Naive thymus-derived CD4-positive, alpha-beta T cell (primary cell): ENCODE measurements at regions of chr17 and their contacts with region 1.

Region 1: DNA sequence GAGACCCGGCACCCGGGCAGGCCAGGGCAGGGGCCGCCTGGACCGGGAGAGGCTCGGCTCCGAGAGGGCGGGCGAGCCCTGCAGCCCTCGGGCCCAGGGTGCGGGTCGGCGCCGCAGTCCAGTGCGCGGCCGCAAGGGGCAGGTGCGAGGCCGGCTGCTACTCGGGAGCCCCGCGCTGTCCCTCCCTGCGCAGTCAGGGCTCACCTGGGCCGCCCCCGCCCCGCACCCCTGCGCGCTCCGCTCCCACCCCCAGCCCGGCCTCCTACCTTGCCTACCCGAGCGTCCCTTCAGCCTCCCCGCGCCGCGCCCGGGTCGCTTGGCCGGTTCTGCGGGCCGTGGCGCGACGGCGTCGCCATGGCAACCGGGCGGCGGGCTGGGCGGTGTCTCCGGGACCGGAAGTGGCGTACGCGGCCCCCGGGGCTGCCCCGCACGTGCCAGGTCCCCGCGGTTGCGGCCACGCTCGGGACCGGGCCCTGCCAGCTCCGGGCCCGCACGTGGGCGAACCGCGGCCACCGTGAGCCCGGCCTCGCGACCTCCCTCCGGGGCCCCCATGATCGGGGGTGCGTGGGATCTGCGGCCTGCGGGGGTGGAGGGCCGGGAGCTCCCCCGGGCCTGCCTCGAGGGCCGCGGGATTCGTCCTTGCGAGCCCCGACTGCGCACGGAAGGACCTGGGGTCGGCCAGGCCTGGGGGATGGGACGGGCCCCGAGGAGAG is at the start of gene CYB561:
- DNase-seq: peak; percentile 34 to 83 (median 54)
- ATAC-seq: peak; percentile 74
- H3K4me3 ChIP-seq: peak within 1 kb of the TSS; percentile 61
- H3K4me3 Mint-ChIP-seq: peak within 1 kb of the TSS; percentile 69 to 87 (median 79)
- H3K27ac ChIP-seq: peak within 1 kb of the TSS; percentile 67
- H3K27ac Mint-ChIP-seq: peak within 1 kb of the TSS; percentile 33 to 86 (median 72)
- H3K4me1 ChIP-seq: peaks cover 9 to 11% of the 10 kb centered on the region in 2 donors
- H3K4me1 Mint-ChIP-seq: peaks cover 11 to 37% (median 23%) of the 10 kb centered on the region in 7 donors
- H3K27me3 ChIP-seq: no peaks in the 10 kb centered on the region
- H3K27me3 Mint-ChIP-seq: peaks cover 0 to 24% (median 0%) of the 10 kb centered on the region in 5 donors
- total RNA-seq, gene CYB561: 5.0 to 20.4 (median 11.0) TPM

Region 2: DNA sequence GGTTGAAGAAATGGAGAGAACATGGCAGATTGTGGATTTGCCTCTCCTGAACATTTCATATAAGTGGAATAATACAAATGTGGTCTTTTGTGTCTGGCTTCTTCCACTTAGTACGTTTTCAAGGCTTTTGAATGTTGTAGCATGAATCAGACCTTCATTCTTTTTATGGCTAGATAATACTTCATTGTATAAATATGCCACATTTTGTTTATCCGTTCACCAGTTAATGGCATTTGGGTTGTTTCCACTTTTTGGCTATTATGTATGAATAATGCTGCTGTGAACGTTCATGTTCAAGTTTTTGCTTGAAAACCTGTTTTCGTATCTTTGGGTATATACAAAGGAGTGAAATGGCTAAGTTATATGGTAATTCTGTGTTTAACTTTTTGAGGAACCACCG is 349.7 kb before region 1 on chr17:
- CTCF ChIA-PET with region 1: no interaction called
- POLR2A ChIA-PET with region 1: no interaction called
- intact Hi-C with region 1: no loop called
- DNase-seq: no peak
- ATAC-seq: no peak
- H3K4me3 ChIP-seq: no peak overlapping the region
- H3K4me3 Mint-ChIP-seq: no peak overlapping the region
- H3K27ac ChIP-seq: no peak overlapping the region
- H3K27ac Mint-ChIP-seq: no peak overlapping the region
- H3K4me1 ChIP-seq: no peaks in the 10 kb centered on the region
- H3K4me1 Mint-ChIP-seq: peaks cover 0 to 6% (median 0%) of the 10 kb centered on the region in 7 donors
- H3K27me3 ChIP-seq: no peaks in the 10 kb centered on the region
- H3K27me3 Mint-ChIP-seq: no peaks in the 10 kb centered on the region

Region 3: DNA sequence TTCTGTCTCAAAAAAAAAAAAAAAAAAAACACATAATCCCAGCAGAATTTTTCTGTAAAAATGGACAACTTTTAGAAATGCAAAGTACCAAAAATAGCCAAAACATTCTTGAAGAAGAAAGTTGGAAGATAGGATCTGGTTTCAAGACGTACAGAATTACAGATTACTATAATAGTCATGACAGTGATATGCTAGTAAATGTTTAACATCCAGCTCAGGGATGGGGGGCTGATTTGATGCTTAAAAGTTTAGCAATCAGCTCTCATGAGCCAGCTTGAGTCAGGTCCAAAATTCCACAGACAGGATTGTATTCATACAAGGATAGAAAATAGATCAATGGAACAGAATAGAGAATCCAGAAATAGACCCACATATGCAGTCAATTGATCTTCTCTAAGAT is 100.5 kb before region 1 on chr17:
- CTCF ChIA-PET with region 1: no interaction called
- POLR2A ChIA-PET with region 1: no interaction called
- intact Hi-C with region 1: no loop called
- DNase-seq: no peak
- ATAC-seq: no peak
- H3K4me3 ChIP-seq: no peak overlapping the region
- H3K4me3 Mint-ChIP-seq: no peak overlapping the region
- H3K27ac ChIP-seq: no peak overlapping the region
- H3K27ac Mint-ChIP-seq: no peak overlapping the region
- H3K4me1 ChIP-seq: no peaks in the 10 kb centered on the region
- H3K4me1 Mint-ChIP-seq: peaks cover 0 to 1% (median 0%) of the 10 kb centered on the region in 7 donors
- H3K27me3 ChIP-seq: no peaks in the 10 kb centered on the region
- H3K27me3 Mint-ChIP-seq: peaks cover 0 to 3% (median 0%) of the 10 kb centered on the region in 5 donors

Region 4: DNA sequence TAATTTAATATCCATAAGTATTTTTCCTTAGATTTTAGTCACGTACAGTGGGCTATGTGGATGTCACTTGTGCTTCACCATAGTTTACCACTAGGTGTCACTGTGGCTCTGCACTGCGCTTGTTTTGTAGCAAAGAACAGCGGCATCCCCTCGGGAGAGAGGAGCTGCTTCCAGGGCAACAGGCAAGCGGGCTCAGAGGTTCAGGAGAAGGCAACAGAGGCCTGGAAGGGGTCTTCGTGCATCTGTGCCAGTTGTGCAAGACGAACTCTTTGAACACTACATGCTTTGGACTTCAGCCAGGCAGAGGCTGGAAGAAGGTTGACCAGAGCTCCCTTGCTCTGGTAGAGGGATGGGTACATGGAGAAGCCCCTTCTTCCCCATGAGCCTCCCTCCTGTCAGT is 20.7 kb before region 1 on chr17:
- CTCF ChIA-PET with region 1: interaction called, 5 read pairs
- POLR2A ChIA-PET with region 1: interaction called, 6 read pairs
- intact Hi-C with region 1: loop called in 1 of 2 experiments (anchors 2 kb)
- DNase-seq: peak; percentile 31 to 74 (median 62)
- ATAC-seq: peak; percentile 91
- H3K4me3 ChIP-seq: no peak overlapping the region
- H3K4me3 Mint-ChIP-seq: peak overlapping the region in 4 of 10 donors; percentile 19 to 67 (median 32)
- H3K27ac ChIP-seq: no peak overlapping the region
- H3K27ac Mint-ChIP-seq: peak overlapping the region in 1 of 9 donors; percentile 41
- H3K4me1 ChIP-seq: peaks cover 22 to 26% of the 10 kb centered on the region in 2 donors
- H3K4me1 Mint-ChIP-seq: peaks cover 20 to 39% (median 28%) of the 10 kb centered on the region in 7 donors
- H3K27me3 ChIP-seq: no peaks in the 10 kb centered on the region
- H3K27me3 Mint-ChIP-seq: peaks cover 0 to 22% (median 0%) of the 10 kb centered on the region in 5 donors

Region 5: DNA sequence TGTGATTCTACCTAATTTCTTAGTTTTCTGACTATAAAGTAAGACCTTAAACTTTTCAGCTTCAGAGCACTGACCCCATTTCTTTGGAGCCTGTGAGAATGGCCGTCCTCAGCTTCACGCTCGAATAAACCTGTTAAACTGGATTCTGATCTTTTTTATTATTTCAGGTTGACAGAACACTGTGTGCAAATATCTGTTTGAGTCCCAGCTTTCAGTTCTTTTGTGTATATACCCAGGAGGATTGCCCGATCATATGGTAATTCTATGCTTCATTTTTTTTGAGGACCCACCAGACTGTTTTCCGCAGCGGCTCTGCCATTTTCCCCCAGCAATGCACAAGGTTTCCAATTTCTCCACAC is 57.2 kb after region 1 on chr17:
- CTCF ChIA-PET with region 1: no interaction called
- POLR2A ChIA-PET with region 1: no interaction called
- intact Hi-C with region 1: loop called in 1 of 2 experiments (anchors 10 kb)
- DNase-seq: no peak
- ATAC-seq: no peak
- H3K4me3 ChIP-seq: no peak overlapping the region
- H3K4me3 Mint-ChIP-seq: no peak overlapping the region
- H3K27ac ChIP-seq: no peak overlapping the region
- H3K27ac Mint-ChIP-seq: no peak overlapping the region
- H3K4me1 ChIP-seq: no peaks in the 10 kb centered on the region
- H3K4me1 Mint-ChIP-seq: no peaks in the 10 kb centered on the region
- H3K27me3 ChIP-seq: no peaks in the 10 kb centered on the region
- H3K27me3 Mint-ChIP-seq: peaks cover 11 to 50% (median 27%) of the 10 kb centered on the region in 5 donors

Region 6: GRCh38 chr17:63589646-63590045 is 143.5 kb after region 1 on chr17:
- CTCF ChIA-PET with region 1: no interaction called
- POLR2A ChIA-PET with region 1: no interaction called
- intact Hi-C with region 1: no loop called
- DNase-seq: no peak
- ATAC-seq: no peak
- H3K4me3 ChIP-seq: no peak overlapping the region
- H3K4me3 Mint-ChIP-seq: no peak overlapping the region
- H3K27ac ChIP-seq: no peak overlapping the region
- H3K27ac Mint-ChIP-seq: peak overlapping the region in 6 of 9 donors; percentile 35 to 71 (median 58)
- H3K4me1 ChIP-seq: peaks cover 0 to 10% of the 10 kb centered on the region in 2 donors
- H3K4me1 Mint-ChIP-seq: peaks cover 10 to 14% (median 11%) of the 10 kb centered on the region in 7 donors
- H3K27me3 ChIP-seq: no peaks in the 10 kb centered on the region
- H3K27me3 Mint-ChIP-seq: no peaks in the 10 kb centered on the region

Region 7: GRCh38 chr17:63611354-63611753 is 165.2 kb after region 1 on chr17:
- CTCF ChIA-PET with region 1: interaction called, 4 read pairs
- POLR2A ChIA-PET with region 1: no interaction called
- intact Hi-C with region 1: loop called in 1 of 2 experiments (anchors 5 kb)
- DNase-seq: peak in 5 of 9 donors; percentile 3 to 57 (median 25)
- ATAC-seq: peak; percentile 47
- H3K4me3 ChIP-seq: no peak overlapping the region
- H3K4me3 Mint-ChIP-seq: peak overlapping the region in 9 of 10 donors; percentile 10 to 74 (median 58)
- H3K27ac ChIP-seq: peak overlapping the region; percentile 52
- H3K27ac Mint-ChIP-seq: peak overlapping the region; percentile 85 to 98 (median 93)
- H3K4me1 ChIP-seq: peaks cover 25 to 28% of the 10 kb centered on the region in 2 donors
- H3K4me1 Mint-ChIP-seq: peaks cover 22 to 30% (median 29%) of the 10 kb centered on the region in 7 donors
- H3K27me3 ChIP-seq: no peaks in the 10 kb centered on the region
- H3K27me3 Mint-ChIP-seq: no peaks in the 10 kb centered on the region

Region 8: DNA sequence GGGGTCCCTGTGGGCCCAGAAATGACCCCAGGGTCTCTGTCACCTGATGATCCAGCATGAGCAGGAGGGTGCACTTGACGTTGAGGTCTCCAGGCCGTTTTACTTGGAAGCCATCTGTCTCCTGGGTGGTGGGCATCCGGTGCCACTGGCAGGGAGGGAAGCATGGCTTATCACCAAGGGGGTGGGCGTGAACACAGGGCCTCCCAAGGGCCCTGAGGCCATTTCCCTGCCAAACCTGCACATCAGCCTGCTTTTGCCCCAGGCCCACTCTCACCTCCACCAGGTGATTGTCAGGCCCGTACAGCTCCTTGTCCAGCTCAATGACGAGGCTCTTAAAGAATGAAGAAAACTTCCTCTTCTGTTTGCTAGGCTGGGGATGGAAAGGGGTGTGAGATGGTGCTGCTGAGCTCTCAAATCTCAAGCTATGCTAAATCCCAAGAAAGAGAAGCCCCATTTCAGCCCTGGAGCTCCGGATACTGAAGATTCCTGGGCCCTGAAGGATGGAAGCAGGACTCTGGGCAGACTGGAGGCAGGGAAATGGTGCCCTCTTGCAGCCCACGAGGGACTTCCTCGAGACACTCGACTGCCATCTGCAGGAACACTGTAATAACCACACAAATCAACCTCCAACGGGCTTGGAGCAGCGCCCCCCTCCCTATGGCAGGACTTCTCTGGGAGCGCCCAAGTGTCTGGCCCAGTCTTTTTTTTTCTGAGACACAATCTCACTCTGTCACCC is 388.5 kb after region 1 on chr17:
- CTCF ChIA-PET with region 1: no interaction called
- POLR2A ChIA-PET with region 1: no interaction called
- intact Hi-C with region 1: loop called in 1 of 2 experiments (anchors 5 kb)
- DNase-seq: peak in 8 of 9 donors; percentile 45 to 72 (median 61)
- ATAC-seq: peak; percentile 95
- H3K4me3 ChIP-seq: no peak overlapping the region
- H3K4me3 Mint-ChIP-seq: peak overlapping the region in 1 of 10 donors; percentile 37
- H3K27ac ChIP-seq: no peak overlapping the region
- H3K27ac Mint-ChIP-seq: peak overlapping the region; percentile 26 to 86 (median 69)
- H3K4me1 ChIP-seq: peaks cover 23 to 42% of the 10 kb centered on the region in 2 donors
- H3K4me1 Mint-ChIP-seq: peaks cover 21 to 77% (median 67%) of the 10 kb centered on the region in 7 donors
- H3K27me3 ChIP-seq: no peaks in the 10 kb centered on the region
- H3K27me3 Mint-ChIP-seq: no peaks in the 10 kb centered on the region